ENCODE measurements at regions of chr2 and their contacts with region 1.

Region 1: GRCh38 chr2:189783927-189784867 is at the starts of genes ORMDL1 and PMS1:
- DNase-seq: peak; percentile 93 to 96 (median 96)
- H3K4me3 ChIP-seq: peak within 1 kb of the TSS; percentile 71 to 74
- H3K4me3 Mint-ChIP-seq: peak within 1 kb of the TSS; percentile 92 to 97 (median 94)
- H3K27ac ChIP-seq: peak within 1 kb of the TSS; percentile 93
- H3K27ac Mint-ChIP-seq: peak within 1 kb of the TSS; percentile 96 to 97 (median 97)
- H3K4me1 ChIP-seq: peaks cover 52% of the 10 kb centered on the region
- H3K4me1 Mint-ChIP-seq: peaks cover 43 to 64% (median 54%) of the 10 kb centered on the region in 4 donors
- H3K27me3 ChIP-seq: no peaks in the 10 kb centered on the region
- H3K27me3 Mint-ChIP-seq: no peaks in the 10 kb centered on the region
- total RNA-seq, gene ORMDL1: 187 to 190 TPM
- total RNA-seq, gene PMS1: 29.1 to 35.1 TPM

Region 2: DNA sequence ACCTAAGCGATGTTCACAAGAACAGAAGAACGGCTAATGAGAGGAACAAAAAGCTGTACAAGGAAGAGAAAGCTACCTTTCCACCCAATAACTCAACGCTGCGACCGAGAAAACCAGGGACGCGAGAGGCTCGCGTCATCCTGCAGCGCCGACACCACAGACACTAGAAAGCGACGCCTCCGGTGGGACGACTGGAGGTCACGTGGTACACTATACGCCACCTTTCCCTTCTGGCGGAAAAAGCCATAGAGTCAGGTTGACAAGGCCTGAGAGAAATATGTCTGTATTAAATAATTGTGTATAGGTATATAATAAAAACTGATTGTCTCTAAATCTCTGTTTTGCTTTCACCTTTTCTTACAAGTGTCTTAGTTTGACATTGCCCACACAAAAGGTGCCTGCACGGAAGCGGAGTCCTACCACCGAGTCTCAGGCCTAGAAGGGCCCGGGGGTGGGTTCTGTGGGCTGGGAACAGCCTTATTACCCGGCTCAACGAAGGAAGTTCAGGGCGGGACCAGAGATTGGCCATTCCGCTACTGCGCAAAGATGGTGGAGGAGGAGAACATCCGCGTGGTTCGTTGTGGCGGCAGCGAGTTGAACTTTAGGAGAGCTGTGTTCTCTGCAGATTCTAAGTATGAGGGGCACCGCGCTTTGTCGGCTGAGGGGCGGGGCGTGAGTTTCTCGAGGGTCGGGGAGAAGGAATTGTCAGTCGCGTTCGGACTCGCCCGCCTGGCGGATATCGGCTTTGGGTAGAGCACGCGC is 343.1 kb before region 1 on chr2 and contains the start of gene WDR75:
- CTCF ChIA-PET with region 1: no interaction called
- POLR2A ChIA-PET with region 1: interaction called, 4 read pairs
- intact Hi-C with region 1: loop called (anchors 1 kb)
- DNase-seq: peak; percentile 93 to 96 (median 95)
- H3K4me3 ChIP-seq: peak within 1 kb of the TSS; percentile 87 to 99
- H3K4me3 Mint-ChIP-seq: peak within 1 kb of the TSS in 6 of 8 donors; percentile 98 to 100 (median 100)
- H3K27ac ChIP-seq: peak within 1 kb of the TSS; percentile 89
- H3K27ac Mint-ChIP-seq: peak within 1 kb of the TSS; percentile 97 to 100 (median 100)
- H3K4me1 ChIP-seq: peaks cover 49% of the 10 kb centered on the region
- H3K4me1 Mint-ChIP-seq: peaks cover 0 to 18% (median 11%) of the 10 kb centered on the region in 4 donors
- H3K27me3 ChIP-seq: no peaks in the 10 kb centered on the region
- H3K27me3 Mint-ChIP-seq: no peaks in the 10 kb centered on the region
- total RNA-seq, gene WDR75: 60.8 to 61.4 TPM

Region 3: GRCh38 chr2:189751080-189751658 is 33.0 kb before region 1 on chr2:
- CTCF ChIA-PET with region 1: interaction called, 5 read pairs
- POLR2A ChIA-PET with region 1: interaction called, 3 read pairs
- intact Hi-C with region 1: loop called (anchors 1 kb)
- DNase-seq: peak; percentile 36 to 49 (median 43)
- H3K4me3 ChIP-seq: no peak overlapping the region
- H3K4me3 Mint-ChIP-seq: no peak overlapping the region
- H3K27ac ChIP-seq: no peak overlapping the region
- H3K27ac Mint-ChIP-seq: peak overlapping the region in 3 of 7 donors; percentile 19 to 89 (median 59)
- H3K4me1 ChIP-seq: no peaks in the 10 kb centered on the region
- H3K4me1 Mint-ChIP-seq: peaks cover 0 to 1% (median 0%) of the 10 kb centered on the region in 4 donors
- H3K27me3 ChIP-seq: no peaks in the 10 kb centered on the region
- H3K27me3 Mint-ChIP-seq: no peaks in the 10 kb centered on the region

Region 4: GRCh38 chr2:189770590-189771322 is 13.4 kb before region 1 on chr2:
- CTCF ChIA-PET with region 1: interaction called, 3 read pairs
- POLR2A ChIA-PET with region 1: interaction called, 18 read pairs
- intact Hi-C with region 1: no loop called
- DNase-seq: no peak
- H3K4me3 ChIP-seq: no peak overlapping the region
- H3K4me3 Mint-ChIP-seq: no peak overlapping the region
- H3K27ac ChIP-seq: no peak overlapping the region
- H3K27ac Mint-ChIP-seq: no peak overlapping the region
- H3K4me1 ChIP-seq: no peaks in the 10 kb centered on the region
- H3K4me1 Mint-ChIP-seq: peaks cover 0 to 3% (median under 1%) of the 10 kb centered on the region in 4 donors
- H3K27me3 ChIP-seq: no peaks in the 10 kb centered on the region
- H3K27me3 Mint-ChIP-seq: no peaks in the 10 kb centered on the region